ENCODE measurements at regions of chr7 and their contacts with region 1.

Region 1: DNA sequence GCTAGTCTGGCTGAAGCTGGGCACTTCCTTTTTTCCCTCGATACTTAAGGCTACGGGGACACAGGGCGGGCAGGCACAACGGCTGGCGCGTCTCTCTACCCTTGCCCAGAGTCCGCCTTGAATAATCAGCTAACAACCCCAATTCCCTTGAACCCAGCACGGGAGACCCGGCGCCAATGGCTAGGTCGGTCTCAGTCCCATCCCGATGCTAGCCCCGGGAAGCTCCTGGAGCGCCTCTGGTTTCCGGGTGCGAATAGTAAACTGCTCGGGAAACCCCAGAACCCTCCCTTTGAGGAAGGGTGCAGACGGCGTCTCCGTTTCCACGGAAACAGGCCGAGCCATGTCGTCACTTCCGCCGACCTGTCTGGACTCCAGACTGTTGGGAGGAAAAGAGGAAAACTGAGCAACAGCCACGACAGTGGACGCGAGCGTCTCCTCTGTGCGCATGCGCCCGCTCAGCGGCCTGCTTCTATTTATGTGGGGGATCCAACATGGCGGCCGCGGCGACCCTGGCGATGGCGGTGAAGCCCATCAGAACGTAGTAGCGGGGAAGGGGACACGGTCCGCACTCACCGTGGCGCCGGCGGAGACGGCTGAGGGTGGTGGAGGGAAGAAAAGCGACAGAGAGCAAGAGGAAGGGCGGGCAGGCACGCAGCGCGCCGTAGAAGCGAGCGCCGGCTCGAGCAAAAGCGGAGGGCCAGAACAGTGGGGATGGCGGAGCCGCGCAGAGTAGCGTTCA is at the start of gene UBN2:
- DNase-seq: peak; percentile 96 to 97
- H3K4me3 ChIP-seq: peak within 1 kb of the TSS; percentile 100
- H3K4me3 Mint-ChIP-seq: peak within 1 kb of the TSS; percentile 87
- H3K27ac Mint-ChIP-seq: peak within 1 kb of the TSS; percentile 89
- H3K4me1 ChIP-seq: peaks cover 6% of the 10 kb centered on the region; the same call in 1 of the 2 replicates
- H3K4me1 Mint-ChIP-seq: peaks cover 8% of the 10 kb centered on the region
- H3K27me3 ChIP-seq: no peaks in the 10 kb centered on the region
- H3K27me3 Mint-ChIP-seq: no peaks in the 10 kb centered on the region
- CTCF ChIP-seq: no peak
- total RNA-seq, gene UBN2: 21.3 and 23.4 TPM in 2 replicates

Region 2: GRCh38 chr7:139109188-139109982 is 121.6 kb before region 1 on chr7 and contains the start of gene ZC3HAV1:
- CTCF ChIA-PET with region 1: no interaction called
- POLR2A ChIA-PET with region 1: no interaction called
- intact Hi-C with region 1: loop called (anchors 1 kb)
- DNase-seq: peak; percentile 88 to 90
- H3K4me3 ChIP-seq: peak within 1 kb of the TSS; percentile 57
- H3K4me3 Mint-ChIP-seq: peak within 1 kb of the TSS; percentile 85
- H3K27ac Mint-ChIP-seq: peak within 1 kb of the TSS; percentile 55
- H3K4me1 ChIP-seq: peaks cover 8% of the 10 kb centered on the region
- H3K4me1 Mint-ChIP-seq: peaks cover 6% of the 10 kb centered on the region
- H3K27me3 ChIP-seq: no peaks in the 10 kb centered on the region
- H3K27me3 Mint-ChIP-seq: no peaks in the 10 kb centered on the region
- CTCF ChIP-seq: peak; percentile 21 to 42
- total RNA-seq, gene ZC3HAV1: 30.8 and 30.9 TPM in 2 replicates

Region 3: GRCh38 chr7:139119486-139119849 is 111.5 kb before region 1 on chr7:
- CTCF ChIA-PET with region 1: no interaction called
- POLR2A ChIA-PET with region 1: no interaction called
- intact Hi-C with region 1: no loop called
- DNase-seq: no peak
- H3K4me3 ChIP-seq: no peak overlapping the region
- H3K4me3 Mint-ChIP-seq: no peak overlapping the region
- H3K27ac Mint-ChIP-seq: no peak overlapping the region
- H3K4me1 ChIP-seq: peaks cover 22% of the 10 kb centered on the region
- H3K4me1 Mint-ChIP-seq: peaks cover 16% of the 10 kb centered on the region
- H3K27me3 ChIP-seq: no peaks in the 10 kb centered on the region
- H3K27me3 Mint-ChIP-seq: no peaks in the 10 kb centered on the region
- CTCF ChIP-seq: no peak

Region 4: GRCh38 chr7:139133335-139134139 is 97.4 kb before region 1 on chr7:
- CTCF ChIA-PET with region 1: no interaction called
- POLR2A ChIA-PET with region 1: interaction called, 4 read pairs
- intact Hi-C with region 1: loop called (anchors 2 kb)
- DNase-seq: peak; percentile 83 to 86
- H3K4me3 ChIP-seq: peak overlapping the region; percentile 65
- H3K4me3 Mint-ChIP-seq: peak overlapping the region; percentile 91
- H3K27ac Mint-ChIP-seq: peak overlapping the region; percentile 86
- H3K4me1 ChIP-seq: no peaks in the 10 kb centered on the region
- H3K4me1 Mint-ChIP-seq: peaks cover 8% of the 10 kb centered on the region
- H3K27me3 ChIP-seq: no peaks in the 10 kb centered on the region
- H3K27me3 Mint-ChIP-seq: no peaks in the 10 kb centered on the region
- CTCF ChIP-seq: no peak

Region 5: GRCh38 chr7:139218173-139218572 is 12.8 kb before region 1 on chr7:
- CTCF ChIA-PET with region 1: no interaction called
- POLR2A ChIA-PET with region 1: no interaction called
- intact Hi-C with region 1: no loop called
- DNase-seq: no peak
- H3K4me3 ChIP-seq: no peak overlapping the region
- H3K4me3 Mint-ChIP-seq: no peak overlapping the region
- H3K27ac Mint-ChIP-seq: no peak overlapping the region
- H3K4me1 ChIP-seq: no peaks in the 10 kb centered on the region
- H3K4me1 Mint-ChIP-seq: no peaks in the 10 kb centered on the region
- H3K27me3 ChIP-seq: no peaks in the 10 kb centered on the region
- H3K27me3 Mint-ChIP-seq: peaks cover 6% of the 10 kb centered on the region
- CTCF ChIP-seq: no peak

Region 6: GRCh38 chr7:139297795-139298194 is 66.9 kb after region 1 on chr7:
- CTCF ChIA-PET with region 1: no interaction called
- POLR2A ChIA-PET with region 1: no interaction called
- intact Hi-C with region 1: loop called (anchors 5 kb)
- DNase-seq: peak; percentile 62 to 74
- H3K4me3 ChIP-seq: no peak overlapping the region
- H3K4me3 Mint-ChIP-seq: peak overlapping the region; percentile 58
- H3K27ac Mint-ChIP-seq: peak overlapping the region; percentile 56
- H3K4me1 ChIP-seq: peaks cover 60% of the 10 kb centered on the region
- H3K4me1 Mint-ChIP-seq: peaks cover 22% of the 10 kb centered on the region
- H3K27me3 ChIP-seq: no peaks in the 10 kb centered on the region
- H3K27me3 Mint-ChIP-seq: no peaks in the 10 kb centered on the region
- CTCF ChIP-seq: no peak

Region 7: DNA sequence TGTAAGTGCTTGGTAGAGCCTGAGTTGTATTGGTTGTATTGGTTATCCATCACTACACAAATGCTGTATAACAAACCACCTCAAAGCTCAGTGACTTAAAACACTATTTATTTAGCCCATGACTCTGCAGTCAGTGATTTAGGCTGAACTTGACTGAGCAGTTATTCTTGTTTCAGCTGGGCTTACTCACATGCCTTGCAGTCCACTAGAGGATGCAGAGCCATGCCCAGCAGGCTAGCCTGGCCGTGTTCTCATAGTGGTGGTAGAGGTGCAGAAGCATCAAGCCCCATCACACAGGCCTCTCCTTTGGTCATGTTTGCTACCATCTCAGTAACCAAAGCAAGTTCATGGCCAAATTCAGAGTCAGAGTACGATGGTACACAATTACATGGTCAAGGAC is 172.7 kb after region 1 on chr7:
- CTCF ChIA-PET with region 1: no interaction called
- POLR2A ChIA-PET with region 1: no interaction called
- intact Hi-C with region 1: no loop called
- DNase-seq: no peak
- H3K4me3 ChIP-seq: no peak overlapping the region
- H3K4me3 Mint-ChIP-seq: no peak overlapping the region
- H3K27ac Mint-ChIP-seq: no peak overlapping the region
- H3K4me1 ChIP-seq: no peaks in the 10 kb centered on the region
- H3K4me1 Mint-ChIP-seq: no peaks in the 10 kb centered on the region
- H3K27me3 ChIP-seq: no peaks in the 10 kb centered on the region
- H3K27me3 Mint-ChIP-seq: no peaks in the 10 kb centered on the region
- CTCF ChIP-seq: no peak